ENCODE measurements at regions of chr19 and their contacts with region 1.

Region 1: DNA sequence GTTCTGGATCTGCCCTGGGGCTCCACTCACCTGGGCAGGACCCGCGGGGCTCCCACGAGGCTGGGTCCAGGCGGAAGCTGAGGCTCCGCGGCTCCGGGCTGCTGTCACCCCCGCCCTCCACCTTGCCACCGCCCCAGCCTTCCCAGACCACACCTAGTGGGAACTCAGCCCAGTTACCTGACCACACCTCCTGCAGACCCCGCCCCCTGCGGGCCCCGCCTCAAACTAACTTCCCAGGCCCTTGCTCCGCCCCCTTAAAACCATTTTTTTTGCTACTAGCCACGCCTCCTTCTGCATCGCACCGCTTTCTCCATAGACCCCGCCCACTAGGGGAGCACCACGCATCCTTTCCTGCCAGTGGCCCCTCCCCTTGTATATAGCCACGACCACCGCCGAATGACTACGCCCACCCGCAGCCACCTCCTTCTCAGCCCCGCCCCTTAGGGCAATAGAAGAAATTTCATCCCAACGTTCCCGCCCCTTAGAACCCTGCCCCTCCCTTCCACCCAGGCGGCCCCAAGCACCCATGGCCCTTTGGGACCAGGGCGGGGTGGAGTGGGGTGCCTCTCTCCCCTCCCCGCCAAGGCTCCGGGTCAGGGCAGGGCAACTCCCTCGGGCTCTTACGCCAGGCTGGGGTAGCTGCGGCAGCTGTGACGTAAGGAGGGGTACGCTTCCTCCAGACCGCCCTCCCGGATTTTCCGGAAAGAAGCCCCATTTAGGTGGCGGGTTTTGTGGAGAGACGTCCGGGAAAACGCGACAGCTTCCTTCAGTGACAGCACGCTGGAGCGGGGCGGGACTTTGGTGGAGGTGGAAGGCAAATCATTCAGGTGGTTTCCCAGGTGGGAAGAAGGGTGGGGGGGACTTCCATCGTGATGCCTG is at the start of gene SH2D3A:
- DNase-seq: peak; percentile 42 to 84 (median 64)
- ATAC-seq: peak; percentile 27 to 77 (median 74)
- H3K4me3 ChIP-seq: peak within 1 kb of the TSS in 9 of 12 donors; percentile 15 to 54 (median 41)
- H3K27ac ChIP-seq: peak within 1 kb of the TSS in 4 of 12 donors; percentile 39 to 72 (median 58)
- H3K4me1 ChIP-seq: peaks cover 0 to 26% (median 10%) of the 10 kb centered on the region in 12 donors
- H3K27me3 ChIP-seq: peaks cover 9 to 32% (median 12%) of the 10 kb centered on the region in 9 donors
- CTCF ChIP-seq: no peak
- POLR2A ChIP-seq: no peak
- total RNA-seq, gene SH2D3A: 0.12 to 0.56 (median 0.52) TPM in 3 of 9 donors, not detected in the others

Region 2: GRCh38 chr19:6649185-6649584 is 118.4 kb before region 1 on chr19:
- intact Hi-C with region 1: loop called in 1 of 10 experiments (anchors 10 kb)
- DNase-seq: no peak
- ATAC-seq: no peak
- H3K4me3 ChIP-seq: no peak overlapping the region
- H3K27ac ChIP-seq: no peak overlapping the region
- H3K4me1 ChIP-seq: peaks cover 0 to 4% (median 0%) of the 10 kb centered on the region in 12 donors
- H3K27me3 ChIP-seq: peaks cover 0 to 35% (median 0%) of the 10 kb centered on the region in 9 donors
- CTCF ChIP-seq: no peak
- POLR2A ChIP-seq: no peak

Region 3: GRCh38 chr19:6674868-6675305 is 92.7 kb before region 1 on chr19:
- intact Hi-C with region 1: no loop called
- DNase-seq: peak; percentile 42 to 79 (median 51)
- ATAC-seq: peak in 3 of 4 donors; percentile 50 to 62 (median 61)
- H3K4me3 ChIP-seq: peak overlapping the region in 1 of 12 donors; percentile 30
- H3K27ac ChIP-seq: peak overlapping the region in 1 of 12 donors; percentile 32
- H3K4me1 ChIP-seq: peaks cover 0 to 24% (median 0%) of the 10 kb centered on the region in 12 donors
- H3K27me3 ChIP-seq: peaks cover 0 to 30% (median 0%) of the 10 kb centered on the region in 9 donors
- CTCF ChIP-seq: no peak
- POLR2A ChIP-seq: no peak

Region 4: GRCh38 chr19:6862673-6863078 is 95.1 kb after region 1 on chr19:
- intact Hi-C with region 1: no loop called
- DNase-seq: peak; percentile 68 to 89 (median 80)
- ATAC-seq: peak; percentile 69 to 96 (median 90)
- H3K4me3 ChIP-seq: peak overlapping the region in 10 of 12 donors; percentile 8 to 53 (median 34)
- H3K27ac ChIP-seq: peak overlapping the region in 1 of 12 donors; percentile 60
- H3K4me1 ChIP-seq: peaks cover 0 to 9% (median 5%) of the 10 kb centered on the region in 12 donors
- H3K27me3 ChIP-seq: peaks cover 0 to 23% (median 0%) of the 10 kb centered on the region in 9 donors
- CTCF ChIP-seq: peak; percentile 67 to 86 (median 80)
- POLR2A ChIP-seq: no peak

Region 5: GRCh38 chr19:6876748-6877147 is 109.2 kb after region 1 on chr19:
- intact Hi-C with region 1: no loop called
- DNase-seq: no peak
- ATAC-seq: no peak
- H3K4me3 ChIP-seq: no peak overlapping the region
- H3K27ac ChIP-seq: peak overlapping the region in 1 of 12 donors; percentile 9
- H3K4me1 ChIP-seq: peaks cover 0 to 5% (median 0%) of the 10 kb centered on the region in 12 donors
- H3K27me3 ChIP-seq: peaks cover 0 to 24% (median 0%) of the 10 kb centered on the region in 9 donors
- CTCF ChIP-seq: no peak
- POLR2A ChIP-seq: no peak

Measured in heart left ventricle (tissue), 16 donors.